ENCODE measurements at regions of chr3 and their contacts with region 1.

Region 1: GRCh38 chr3:139427283-139427993 is 38.0 kb upstream of the COPB2 start:
- DNase-seq: no peak
- ATAC-seq: peak; percentile 80

Region 2: DNA sequence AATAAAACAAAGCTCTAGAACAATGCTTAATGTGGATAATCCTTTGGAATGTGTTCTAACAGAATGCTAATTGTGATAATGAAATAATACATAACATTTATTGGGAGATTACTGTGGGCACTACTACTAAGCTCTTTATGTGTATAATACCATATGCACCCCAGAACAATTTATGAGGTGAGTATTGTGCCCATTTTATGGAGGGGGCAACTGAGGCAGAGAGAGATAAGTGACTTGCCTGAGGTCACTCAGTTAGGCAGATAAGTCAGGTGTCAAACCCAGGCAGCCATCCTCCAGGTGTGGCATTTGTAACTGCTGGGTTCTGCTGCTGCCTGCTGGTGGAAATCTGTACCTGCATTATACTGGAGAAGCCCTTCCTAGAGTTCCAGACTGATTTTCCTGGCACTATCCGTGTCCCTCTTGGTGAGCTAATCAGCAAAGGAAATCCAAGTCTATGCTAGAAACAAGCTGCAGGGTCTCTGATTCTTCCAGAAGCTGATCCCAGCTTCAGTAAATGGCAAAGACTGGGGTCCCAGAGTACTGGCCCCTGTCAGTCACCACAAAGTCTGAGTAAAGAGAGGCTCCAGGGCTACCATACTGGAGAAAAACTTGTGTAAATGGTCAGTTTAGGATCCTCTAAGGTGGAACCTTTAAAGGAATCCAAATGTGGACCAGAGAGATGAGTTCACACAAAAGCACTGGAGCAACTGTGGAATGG is 134.7 kb after region 1 on chr3:
- intact Hi-C with region 1: loop called (anchors 1 kb)
- DNase-seq: no peak
- ATAC-seq: peak; percentile 57

Region 3: DNA sequence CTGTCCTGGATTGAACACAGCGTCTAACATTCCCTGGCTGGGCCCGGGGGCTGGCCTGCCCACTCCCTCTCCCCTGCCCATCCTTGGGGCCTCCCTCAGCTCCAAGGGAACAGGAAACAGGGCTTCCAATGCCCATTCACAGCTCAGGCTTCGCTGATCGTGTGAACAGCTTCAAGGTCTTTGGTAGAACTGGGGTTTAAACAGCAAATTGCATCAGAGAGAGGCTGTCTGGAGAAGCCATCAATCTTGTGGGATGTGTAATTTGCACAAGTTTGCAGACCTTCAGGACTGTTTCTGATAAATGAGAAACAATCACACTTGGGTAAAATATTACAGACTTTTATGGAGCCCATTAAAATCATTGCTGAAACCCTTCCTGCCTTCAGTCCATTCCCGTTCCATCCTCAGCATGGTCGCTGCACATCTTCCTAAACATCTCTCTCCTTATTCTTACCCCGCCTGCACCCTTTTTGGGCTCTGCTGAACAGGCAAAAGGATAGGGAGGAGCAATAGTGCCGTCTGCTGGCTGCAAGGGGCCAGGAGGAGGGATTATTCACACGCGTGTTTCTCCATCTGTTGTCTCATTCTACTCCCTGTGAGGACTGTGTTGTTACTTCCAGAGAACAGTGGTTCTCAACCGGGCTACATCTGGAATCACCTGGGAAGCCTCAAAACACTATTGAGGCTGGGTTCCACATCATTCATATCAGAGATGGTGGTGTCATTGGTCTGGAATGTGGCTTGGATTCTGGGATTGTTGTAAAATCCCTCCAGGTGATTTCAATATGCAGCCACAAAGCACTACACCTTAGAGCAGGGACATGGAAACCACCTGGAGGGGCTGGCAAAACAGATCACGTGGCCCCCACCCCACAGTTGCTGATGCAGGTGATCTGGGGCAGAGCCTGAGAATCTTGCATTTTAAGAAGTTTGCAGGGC is 623.9 kb after region 1 on chr3:
- intact Hi-C with region 1: loop called (anchors 10 kb)
- DNase-seq: no peak
- ATAC-seq: no peak

Region 4: DNA sequence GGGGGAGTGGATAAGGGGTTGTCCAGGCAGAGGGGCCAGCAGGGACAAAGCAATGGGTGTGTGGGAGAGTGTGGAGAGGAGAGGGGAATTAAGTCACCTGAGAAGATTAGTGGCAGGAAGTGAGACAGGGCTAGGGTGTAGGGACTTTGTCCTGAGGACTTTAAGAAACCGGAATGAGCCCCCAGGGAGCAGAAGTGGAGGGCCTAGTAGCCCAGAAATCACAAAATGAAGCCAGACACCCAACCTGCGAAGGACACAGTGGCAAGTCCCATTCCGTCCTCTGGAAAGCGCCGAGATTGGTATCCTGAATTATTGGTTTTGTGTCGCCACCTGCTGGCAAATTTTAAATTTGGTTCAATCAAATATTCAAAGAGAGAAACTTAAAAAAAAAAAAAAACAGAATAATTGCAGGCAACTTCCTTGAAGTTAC is 1436.2 kb after region 1 on chr3:
- intact Hi-C with region 1: loop called (anchors 10 kb)
- DNase-seq: no peak
- ATAC-seq: no peak